Aorta (tissue), 5 donors: ENCODE measurements at regions of chr4 and their contacts with region 1.

Region 1: DNA sequence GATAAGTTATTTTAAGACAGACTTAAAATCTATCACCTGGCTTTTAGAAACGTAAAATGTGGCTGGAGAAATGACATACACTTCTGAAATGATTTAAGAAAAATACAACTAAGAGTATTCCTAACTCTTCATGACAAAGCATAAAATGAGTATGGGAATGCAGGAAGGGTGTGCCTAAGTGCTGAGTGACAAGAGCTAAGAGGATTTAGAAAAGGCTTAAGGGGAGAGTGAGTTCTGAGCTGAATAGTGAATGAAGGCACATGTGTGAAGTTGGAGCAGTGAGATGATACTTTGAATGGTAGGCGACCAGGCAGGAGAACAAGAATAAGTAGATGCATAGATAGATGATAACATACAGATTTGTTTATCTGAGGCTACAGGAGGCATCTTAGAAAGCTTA is 458.3 kb upstream of the TENM3 start:
- DNase-seq: no peak
- ATAC-seq: no peak
- H3K4me3 ChIP-seq: no peak overlapping the region
- H3K27ac ChIP-seq: no peak overlapping the region
- H3K4me1 ChIP-seq: no peaks in the 10 kb centered on the region
- H3K27me3 ChIP-seq: no peaks in the 10 kb centered on the region

Region 2: DNA sequence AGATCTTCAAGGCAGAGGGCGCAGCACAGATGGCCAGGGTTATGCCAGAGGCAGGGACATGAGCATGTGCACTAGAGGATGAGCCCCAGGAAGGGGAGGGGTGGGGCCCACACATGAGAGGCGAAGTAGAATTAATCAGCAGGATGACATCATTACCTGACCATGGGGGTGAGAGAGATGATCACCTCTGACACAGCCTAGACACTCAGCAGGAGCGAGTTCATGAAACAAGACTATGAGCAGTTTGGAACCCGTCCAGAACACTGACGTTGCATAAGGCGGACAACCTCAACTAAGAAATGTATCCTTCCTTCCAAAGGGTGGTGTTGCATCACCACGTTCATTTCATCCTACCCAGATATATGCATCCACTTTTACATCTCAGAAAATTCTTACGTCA is 11.6 kb after region 1 on chr4:
- intact Hi-C with region 1: loop called in 1 of 2 experiments (anchors 1 kb)
- DNase-seq: no peak
- ATAC-seq: no peak
- H3K4me3 ChIP-seq: no peak overlapping the region
- H3K27ac ChIP-seq: no peak overlapping the region
- H3K4me1 ChIP-seq: no peaks in the 10 kb centered on the region
- H3K27me3 ChIP-seq: no peaks in the 10 kb centered on the region

Region 3: DNA sequence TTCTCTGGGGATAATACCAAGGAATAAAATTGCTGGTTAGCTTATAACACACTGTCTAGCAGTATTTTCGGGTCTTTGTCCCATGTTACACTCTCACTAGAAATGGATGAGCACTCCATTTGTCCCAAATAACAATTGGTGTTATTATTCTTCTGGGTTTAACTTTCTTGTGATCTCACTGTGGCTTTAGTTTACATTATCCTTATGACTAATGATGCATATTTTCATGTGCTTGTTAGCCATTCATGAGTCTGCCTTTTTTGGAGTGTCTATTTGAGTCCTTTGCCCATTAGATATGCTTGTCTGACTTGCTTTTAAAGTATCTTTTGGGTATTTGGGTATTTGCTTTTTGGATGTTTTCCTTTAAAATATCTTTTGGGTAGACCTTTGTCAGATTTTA is 85.4 kb after region 1 on chr4:
- intact Hi-C with region 1: no loop called
- DNase-seq: no peak
- ATAC-seq: no peak
- H3K4me3 ChIP-seq: no peak overlapping the region
- H3K27ac ChIP-seq: no peak overlapping the region
- H3K4me1 ChIP-seq: no peaks in the 10 kb centered on the region
- H3K27me3 ChIP-seq: no peaks in the 10 kb centered on the region